ENCODE measurements at regions of chr2 and their contacts with region 1.

Region 1: DNA sequence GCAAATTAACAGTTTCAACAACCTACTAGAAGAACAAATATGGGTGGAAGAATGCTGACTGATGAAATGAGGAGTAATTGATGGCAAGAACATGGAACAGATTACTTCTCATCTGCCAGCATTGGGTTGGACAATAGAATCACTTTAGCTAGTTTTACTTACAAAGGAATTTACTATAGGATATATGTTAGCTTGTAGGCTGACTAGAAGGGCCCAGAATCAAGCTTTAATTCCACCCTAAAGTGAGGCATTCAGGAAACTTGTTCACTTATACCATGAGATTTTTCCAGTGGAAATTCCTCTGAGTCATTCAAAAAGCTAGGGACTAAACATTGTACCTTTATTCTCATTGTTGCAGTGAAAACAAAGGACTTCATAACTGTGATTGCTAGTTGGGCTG is 5.0 kb upstream of the ZSWIM2 start:
- DNase-seq: no peak
- H3K4me3 ChIP-seq: no peak overlapping the region
- CTCF ChIP-seq: no peak
- POLR2A ChIP-seq: no peak

Region 2: DNA sequence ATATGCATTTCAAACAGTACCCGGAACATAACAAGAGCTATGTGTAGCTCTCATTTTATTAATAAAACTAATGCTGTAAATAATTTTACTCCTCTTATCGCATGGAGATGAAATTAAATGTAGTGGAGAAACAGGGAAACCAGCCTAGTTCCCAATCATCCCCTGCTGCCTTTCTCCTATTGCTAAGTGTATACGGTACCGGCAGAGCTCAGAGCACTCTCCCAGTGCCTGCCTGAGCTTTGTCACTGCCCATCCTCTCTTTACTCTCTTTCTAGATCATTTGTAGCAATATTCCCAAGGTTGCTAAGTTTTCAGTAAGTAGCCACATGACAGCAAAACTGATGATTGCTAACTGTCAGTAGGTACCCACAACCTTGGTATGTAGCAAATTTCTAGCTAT is 80.5 kb after region 1 on chr2:
- intact Hi-C with region 1: loop called (anchors 2 kb)
- DNase-seq: no peak
- H3K4me3 ChIP-seq: no peak overlapping the region
- CTCF ChIP-seq: no peak
- POLR2A ChIP-seq: no peak